Uterus (tissue), 4 donors: ENCODE measurements at regions of chr14 and their contacts with region 1.

Region 1: GRCh38 chr14:41070475-41070874 is 536.2 kb upstream of the LRFN5 start:
- DNase-seq: no peak
- H3K4me3 ChIP-seq: no peak overlapping the region
- H3K27ac ChIP-seq: no peak overlapping the region
- H3K4me1 ChIP-seq: no peaks in the 10 kb centered on the region
- H3K27me3 ChIP-seq: no peaks in the 10 kb centered on the region
- CTCF ChIP-seq: no peak
- POLR2A ChIP-seq: no peak

Region 2: DNA sequence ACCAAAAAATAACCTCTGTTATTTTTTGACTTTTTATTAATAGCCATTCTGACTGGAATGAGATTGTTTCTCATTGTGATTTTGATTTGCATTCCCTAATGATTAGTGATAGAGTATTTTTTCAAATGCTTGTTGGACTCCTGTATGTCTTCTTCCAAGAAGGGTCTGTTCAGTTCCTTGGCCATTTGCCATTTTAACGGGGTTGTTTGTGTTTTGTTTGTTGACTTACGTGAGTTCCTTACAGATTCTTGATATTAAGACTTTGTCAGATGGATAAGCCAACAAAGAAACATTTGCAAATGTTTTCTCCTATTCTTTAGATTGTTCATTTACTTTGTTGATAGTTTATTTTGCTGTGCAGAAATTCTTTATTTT is 115.4 kb before region 1 on chr14:
- intact Hi-C with region 1: no loop called
- DNase-seq: no peak
- H3K4me3 ChIP-seq: no peak overlapping the region
- H3K27ac ChIP-seq: no peak overlapping the region
- H3K4me1 ChIP-seq: no peaks in the 10 kb centered on the region
- H3K27me3 ChIP-seq: no peaks in the 10 kb centered on the region
- CTCF ChIP-seq: no peak
- POLR2A ChIP-seq: no peak

Region 3: GRCh38 chr14:41051801-41052200 is 18.7 kb before region 1 on chr14:
- intact Hi-C with region 1: loop called (anchors 2 kb)
- DNase-seq: no peak
- H3K4me3 ChIP-seq: no peak overlapping the region
- H3K27ac ChIP-seq: no peak overlapping the region
- H3K4me1 ChIP-seq: no peaks in the 10 kb centered on the region
- H3K27me3 ChIP-seq: no peaks in the 10 kb centered on the region
- CTCF ChIP-seq: no peak
- POLR2A ChIP-seq: no peak

Region 4: GRCh38 chr14:41201721-41202120 is 131.2 kb after region 1 on chr14:
- intact Hi-C with region 1: no loop called
- DNase-seq: no peak
- H3K4me3 ChIP-seq: no peak overlapping the region
- H3K27ac ChIP-seq: no peak overlapping the region
- H3K4me1 ChIP-seq: no peaks in the 10 kb centered on the region
- H3K27me3 ChIP-seq: no peaks in the 10 kb centered on the region
- CTCF ChIP-seq: no peak
- POLR2A ChIP-seq: no peak

Region 5: GRCh38 chr14:41839661-41840060 is 769.2 kb after region 1 on chr14:
- intact Hi-C with region 1: no loop called
- DNase-seq: no peak
- H3K4me3 ChIP-seq: no peak overlapping the region
- H3K27ac ChIP-seq: no peak overlapping the region
- H3K4me1 ChIP-seq: no peaks in the 10 kb centered on the region
- H3K27me3 ChIP-seq: no peaks in the 10 kb centered on the region
- CTCF ChIP-seq: no peak
- POLR2A ChIP-seq: no peak